Activated CD8-positive, alpha-beta T cell treated with anti-CD3 and anti-CD28 coated beads for 36 hours (primary cell): ENCODE measurements at regions of chr12 and their contacts with region 1.

Region 1: DNA sequence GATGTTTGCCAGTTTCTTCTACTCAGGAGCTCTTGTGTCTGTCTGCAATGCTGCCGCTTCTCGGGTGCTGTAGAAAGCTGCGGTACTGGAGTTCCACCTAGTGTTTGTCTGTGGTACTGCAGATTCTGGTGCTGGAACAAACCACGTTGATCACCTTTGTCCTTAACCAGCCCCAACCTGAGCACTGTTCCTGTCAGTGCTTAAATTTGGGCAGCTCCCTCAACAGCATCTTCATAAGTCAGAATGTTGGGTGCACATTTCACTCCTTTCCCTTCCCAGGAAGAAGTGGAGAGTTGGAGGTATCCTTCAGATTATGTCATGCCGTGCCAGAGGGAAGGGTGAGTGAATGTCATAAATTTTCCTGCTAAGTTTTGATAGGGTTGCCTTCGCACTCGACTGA is 48.7 kb upstream of the LALBA start:
- DNase-seq: peak; percentile 87
- ATAC-seq: peak; percentile 98
- H3K4me3 Mint-ChIP-seq: no peak overlapping the region
- H3K27ac Mint-ChIP-seq: no peak overlapping the region
- H3K4me1 Mint-ChIP-seq: no peaks in the 10 kb centered on the region
- H3K27me3 Mint-ChIP-seq: peaks cover 13% of the 10 kb centered on the region
- CTCF ChIP-seq: peak; percentile 97

Region 2: GRCh38 chr12:48197971-48198671 is 420.4 kb before region 1 on chr12:
- CTCF ChIA-PET with region 1: interaction called, 36 read pairs
- POLR2A ChIA-PET with region 1: interaction called, 3 read pairs
- intact Hi-C with region 1: no loop called
- DNase-seq: peak; percentile 98
- ATAC-seq: peak; percentile 98
- H3K4me3 Mint-ChIP-seq: peak overlapping the region; percentile 84
- H3K27ac Mint-ChIP-seq: peak overlapping the region; percentile 98
- H3K4me1 Mint-ChIP-seq: peaks cover 19% of the 10 kb centered on the region
- H3K27me3 Mint-ChIP-seq: peaks cover 3% of the 10 kb centered on the region
- CTCF ChIP-seq: no peak

Region 3: DNA sequence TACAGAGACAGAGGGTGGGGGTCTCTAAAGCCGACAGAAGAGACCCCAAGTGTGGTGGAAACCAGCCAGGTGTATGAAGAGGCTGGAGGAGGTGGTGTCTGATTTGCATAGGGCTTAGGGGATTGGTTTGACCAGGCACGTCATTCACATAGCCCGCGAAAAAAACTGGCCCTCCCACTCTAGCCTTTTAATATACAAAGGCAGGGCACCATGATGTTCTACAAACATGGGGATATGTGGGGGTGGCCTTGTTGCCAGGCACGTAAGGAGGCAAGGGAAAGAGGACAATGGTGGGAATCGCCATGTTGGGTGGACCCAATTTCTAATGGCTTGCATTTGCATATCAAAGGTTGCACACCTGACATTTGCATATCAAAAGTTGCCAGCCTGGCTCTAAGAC is 61.9 kb before region 1 on chr12:
- CTCF ChIA-PET with region 1: interaction called, 13 read pairs
- POLR2A ChIA-PET with region 1: no interaction called
- intact Hi-C with region 1: no loop called
- DNase-seq: no peak
- ATAC-seq: no peak
- H3K4me3 Mint-ChIP-seq: no peak overlapping the region
- H3K27ac Mint-ChIP-seq: no peak overlapping the region
- H3K4me1 Mint-ChIP-seq: no peaks in the 10 kb centered on the region
- H3K27me3 Mint-ChIP-seq: peaks cover 1% of the 10 kb centered on the region
- CTCF ChIP-seq: no peak

Region 4: GRCh38 chr12:48580831-48581230 is 37.7 kb before region 1 on chr12:
- CTCF ChIA-PET with region 1: interaction called, 14 read pairs
- POLR2A ChIA-PET with region 1: no interaction called
- intact Hi-C with region 1: no loop called
- DNase-seq: no peak
- ATAC-seq: no peak
- H3K4me3 Mint-ChIP-seq: no peak overlapping the region
- H3K27ac Mint-ChIP-seq: no peak overlapping the region
- H3K4me1 Mint-ChIP-seq: no peaks in the 10 kb centered on the region
- H3K27me3 Mint-ChIP-seq: peaks cover 8% of the 10 kb centered on the region
- CTCF ChIP-seq: no peak

Region 5: DNA sequence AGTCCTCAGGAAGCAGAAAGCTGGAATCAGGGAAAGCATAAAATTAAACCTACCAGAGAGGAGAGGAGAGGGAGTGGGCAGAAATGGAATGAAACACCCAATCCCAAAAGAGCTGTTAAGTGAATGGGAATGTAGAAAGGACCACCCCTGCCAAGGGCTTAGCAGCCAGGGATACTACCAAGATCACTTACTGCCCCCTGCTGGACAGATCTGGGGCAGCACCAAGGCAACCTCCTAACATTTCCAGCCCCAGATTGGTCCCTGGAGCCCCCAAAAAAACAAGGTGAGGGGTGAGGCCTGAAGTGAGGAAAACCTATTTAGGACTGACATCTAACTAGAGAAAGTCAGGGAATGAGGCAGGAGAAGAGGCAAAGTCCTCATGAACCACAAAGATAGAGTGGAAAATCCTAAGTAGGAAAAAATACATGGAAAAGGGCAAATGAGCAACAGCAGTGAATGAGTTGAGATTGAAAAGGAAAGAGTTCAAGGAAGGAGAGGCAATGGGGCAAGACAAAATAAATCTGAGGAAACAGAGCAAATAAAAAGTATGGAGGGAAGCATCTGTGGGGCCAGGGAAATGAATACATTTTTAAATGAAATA is 317.9 kb after region 1 on chr12:
- CTCF ChIA-PET with region 1: no interaction called
- POLR2A ChIA-PET with region 1: no interaction called
- intact Hi-C with region 1: no loop called
- DNase-seq: peak; percentile 92
- ATAC-seq: peak; percentile 79
- H3K4me3 Mint-ChIP-seq: no peak overlapping the region
- H3K27ac Mint-ChIP-seq: no peak overlapping the region
- H3K4me1 Mint-ChIP-seq: peaks cover 24% of the 10 kb centered on the region
- H3K27me3 Mint-ChIP-seq: no peaks in the 10 kb centered on the region
- CTCF ChIP-seq: peak; percentile 86

Region 6: GRCh38 chr12:48969833-48970701 is 351.5 kb after region 1 on chr12:
- CTCF ChIA-PET with region 1: no interaction called
- POLR2A ChIA-PET with region 1: no interaction called
- intact Hi-C with region 1: no loop called
- DNase-seq: peak; percentile 26
- ATAC-seq: peak; percentile 14
- H3K4me3 Mint-ChIP-seq: peak overlapping the region; percentile 17
- H3K27ac Mint-ChIP-seq: no peak overlapping the region
- H3K4me1 Mint-ChIP-seq: peaks cover 48% of the 10 kb centered on the region
- H3K27me3 Mint-ChIP-seq: peaks cover 34% of the 10 kb centered on the region
- CTCF ChIP-seq: no peak